Gastrocnemius medialis (tissue), 4 donors: ENCODE measurements at regions of chr14 and their contacts with region 1.

Region 1: DNA sequence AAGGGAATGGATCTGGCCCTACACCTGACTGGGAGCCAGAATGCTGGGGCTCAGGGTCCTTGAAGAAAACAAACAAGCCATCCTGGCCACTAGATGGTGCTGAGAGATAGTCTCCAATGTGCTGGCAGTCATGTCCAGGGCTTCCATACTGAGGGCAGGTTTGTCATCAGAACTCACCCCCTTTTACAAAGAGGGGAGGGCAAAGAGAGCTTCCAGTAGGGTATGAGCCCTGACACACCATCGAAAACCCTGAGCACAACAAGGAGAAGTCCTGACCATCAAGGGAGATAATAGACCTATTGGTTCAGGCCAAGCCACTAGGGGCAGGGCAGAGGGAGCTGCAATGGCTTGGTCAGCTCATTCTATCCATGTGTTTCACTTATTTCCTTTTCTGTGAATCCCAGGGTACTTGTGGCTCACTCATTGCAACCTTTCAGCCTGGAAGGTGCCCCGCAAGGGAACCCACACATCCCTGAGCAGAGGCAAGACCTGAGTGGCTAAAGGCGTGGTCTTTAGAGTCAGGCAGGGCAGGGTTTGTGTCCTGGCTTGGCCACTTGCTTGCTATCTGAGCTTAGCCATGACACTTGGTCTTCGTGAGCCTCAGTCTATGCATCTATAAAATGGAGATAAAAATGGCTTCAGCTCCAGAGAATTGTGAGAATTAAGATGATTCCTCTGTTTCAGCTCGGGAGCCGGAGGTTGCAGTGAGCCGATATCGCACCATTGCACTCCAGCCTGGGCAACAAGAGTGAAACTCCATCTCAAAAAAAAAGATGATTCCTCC is 6.2 kb upstream of the PLEKHH1 start:
- DNase-seq: peak in 1 of 2 donors; percentile 33
- ATAC-seq: peak; percentile 79 to 82
- H3K4me3 ChIP-seq: no peak overlapping the region
- H3K27ac ChIP-seq: no peak overlapping the region
- H3K4me1 ChIP-seq: no peaks in the 10 kb centered on the region
- H3K27me3 ChIP-seq: peaks cover 0 to 22% (median 5%) of the 10 kb centered on the region in 3 donors
- CTCF ChIP-seq: peak; percentile 60 to 79 (median 75)
- POLR2A ChIP-seq: no peak

Region 2: DNA sequence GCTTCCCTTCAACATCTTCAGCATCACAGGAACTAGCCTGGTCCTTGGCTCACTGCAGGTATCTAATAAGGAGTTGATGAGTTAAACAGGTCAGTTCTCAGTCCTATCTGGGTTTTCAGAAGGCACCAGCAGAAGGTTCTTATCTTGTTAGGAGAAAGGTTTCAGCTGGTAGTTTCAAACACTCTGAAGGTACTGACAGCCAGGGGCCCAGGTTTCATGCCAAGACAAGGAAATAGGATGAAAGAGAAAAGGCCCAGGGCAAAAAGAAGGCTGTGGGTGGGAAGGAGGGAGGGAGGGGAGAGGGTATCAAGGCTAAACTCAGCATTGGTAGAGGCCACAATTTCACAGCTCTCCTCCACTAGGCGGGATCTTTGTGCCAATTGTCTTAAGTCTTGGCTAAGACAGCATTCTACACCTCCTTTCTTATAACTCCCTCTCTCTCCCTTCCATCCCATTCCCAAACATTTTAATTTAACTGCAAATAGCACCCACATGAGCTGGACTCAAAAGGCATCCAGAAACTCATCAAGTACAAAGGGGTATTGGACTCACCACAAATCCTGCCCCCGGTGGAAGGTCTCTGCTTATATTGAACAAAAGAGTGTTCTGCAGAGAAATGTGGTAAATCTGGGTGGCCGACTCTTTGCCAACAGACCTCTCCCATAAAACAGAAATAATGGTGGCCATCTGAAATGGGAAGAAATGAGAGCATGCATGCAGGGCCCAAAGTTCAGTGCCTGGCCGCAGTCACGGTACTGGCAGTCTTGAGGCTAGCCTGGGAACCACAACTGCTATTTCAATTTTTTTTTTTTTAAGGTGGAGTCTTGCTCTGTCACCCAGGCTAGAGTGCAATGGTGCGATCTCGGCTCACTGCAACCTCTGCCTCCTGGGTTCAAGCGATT is 59.4 kb before region 1 on chr14:
- in situ Hi-C with region 1: no loop called
- intact Hi-C with region 1: no loop called
- DNase-seq: no peak
- ATAC-seq: no peak
- H3K4me3 ChIP-seq: no peak overlapping the region
- H3K27ac ChIP-seq: no peak overlapping the region
- H3K4me1 ChIP-seq: no peaks in the 10 kb centered on the region
- H3K27me3 ChIP-seq: no peaks in the 10 kb centered on the region
- CTCF ChIP-seq: no peak
- POLR2A ChIP-seq: no peak

Region 3: DNA sequence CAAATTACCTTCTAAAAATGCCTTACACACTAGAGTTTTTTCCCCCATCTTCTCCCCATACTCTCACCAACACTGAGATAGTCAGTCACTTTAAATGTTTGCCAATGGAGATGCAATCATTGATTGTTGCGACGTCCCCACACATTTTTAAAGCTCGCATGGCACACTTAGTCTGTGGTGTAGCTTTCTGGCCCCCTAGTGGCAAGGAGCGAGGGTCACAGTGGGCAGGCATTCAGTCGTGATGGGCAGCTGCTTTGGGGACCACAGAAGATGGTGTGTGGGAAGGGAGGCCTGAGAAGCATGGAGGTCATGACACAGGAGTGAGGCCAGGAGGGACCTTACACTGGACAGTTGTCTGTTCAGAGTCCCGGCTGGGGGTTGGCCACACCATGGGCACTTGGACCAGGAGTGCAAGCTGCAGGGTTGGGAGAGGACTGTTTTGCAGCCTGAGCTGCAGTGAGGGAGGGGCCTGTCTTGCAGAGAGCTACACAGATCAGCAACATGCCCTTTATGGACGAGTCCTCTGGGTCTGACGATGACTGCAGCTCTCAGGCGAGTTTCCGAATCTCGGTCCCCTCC is 44.5 kb after region 1 on chr14:
- in situ Hi-C with region 1: loop called in 2 of 4 experiments (anchors 5 kb)
- intact Hi-C with region 1: loop called (anchors 1 kb)
- DNase-seq: peak; percentile 25 to 41
- ATAC-seq: peak; percentile 59 to 64
- H3K4me3 ChIP-seq: no peak overlapping the region
- H3K27ac ChIP-seq: no peak overlapping the region
- H3K4me1 ChIP-seq: peaks cover 2 to 9% of the 10 kb centered on the region in 2 donors
- H3K27me3 ChIP-seq: no peaks in the 10 kb centered on the region
- CTCF ChIP-seq: peak; percentile 60 to 90 (median 85)
- POLR2A ChIP-seq: no peak

Region 4: GRCh38 chr14:67704484-67705089 is 177.7 kb after region 1 on chr14:
- in situ Hi-C with region 1: loop called in 1 of 4 experiments (anchors 10 kb)
- intact Hi-C with region 1: loop called (anchors 1 kb)
- DNase-seq: no peak
- ATAC-seq: peak; percentile 69 to 89
- H3K4me3 ChIP-seq: no peak overlapping the region
- H3K27ac ChIP-seq: no peak overlapping the region
- H3K4me1 ChIP-seq: no peaks in the 10 kb centered on the region
- H3K27me3 ChIP-seq: no peaks in the 10 kb centered on the region
- CTCF ChIP-seq: peak; percentile 61 to 79 (median 68)
- POLR2A ChIP-seq: no peak